CD8-positive, alpha-beta T cell (primary cell): ENCODE measurements at regions of chr19 and their contacts with region 1.

Region 1: GRCh38 chr19:18322759-18323460 is at the start of gene LSM4:
- DNase-seq: peak; percentile 99 to 100 (median 99)
- ATAC-seq: peak; percentile 94
- H3K4me3 ChIP-seq: peak within 1 kb of the TSS; percentile 84 to 94
- H3K4me3 Mint-ChIP-seq: peak within 1 kb of the TSS; percentile 84
- H3K27ac ChIP-seq: peak within 1 kb of the TSS; percentile 81 to 85
- H3K27ac Mint-ChIP-seq: peak within 1 kb of the TSS; percentile 92
- H3K4me1 ChIP-seq: peaks cover 58% of the 10 kb centered on the region
- H3K4me1 Mint-ChIP-seq: peaks cover 47% of the 10 kb centered on the region
- H3K27me3 ChIP-seq: no peaks in the 10 kb centered on the region
- H3K27me3 Mint-ChIP-seq: no peaks in the 10 kb centered on the region
- CTCF ChIP-seq: peak; percentile 71
- total RNA-seq, gene LSM4: 41.1 to 43.9 TPM

Region 2: DNA sequence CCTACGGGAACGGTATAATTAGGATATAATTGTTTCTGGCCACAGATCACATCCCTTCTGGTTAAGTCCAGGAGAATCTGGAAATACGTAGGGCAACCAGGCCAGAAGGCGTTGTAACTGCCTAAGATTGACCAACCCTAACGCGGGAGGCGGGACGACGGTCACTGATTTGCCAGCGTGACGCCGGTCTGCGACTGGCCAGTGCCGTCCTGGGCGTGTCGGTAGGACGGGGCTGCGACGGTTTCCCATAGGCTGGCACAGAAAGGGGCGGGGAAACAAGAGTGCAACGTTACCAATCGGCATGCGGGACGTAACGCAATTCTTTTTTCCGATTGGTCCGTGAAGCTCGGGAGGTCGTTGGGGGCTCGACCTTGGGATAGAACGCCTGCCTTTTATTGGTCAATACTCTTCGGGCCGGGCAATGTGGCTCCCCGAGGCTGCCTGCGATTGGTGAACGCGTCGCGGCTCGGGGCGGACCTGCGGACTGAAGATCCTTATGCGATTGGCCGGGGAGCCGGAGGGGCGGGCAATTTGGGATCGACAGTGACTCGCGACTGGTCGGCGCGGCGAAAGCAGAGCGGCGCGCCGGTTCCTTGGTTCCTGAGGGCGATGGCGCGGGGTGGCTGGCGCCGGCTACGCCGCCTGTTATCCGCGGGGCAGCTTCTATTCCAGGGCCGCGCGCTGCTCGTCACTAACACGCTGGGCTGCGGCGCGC is 130.1 kb before region 1 on chr19 and contains the start of gene MPV17L2:
- CTCF ChIA-PET with region 1: interaction called, 5 read pairs
- POLR2A ChIA-PET with region 1: no interaction called
- intact Hi-C with region 1: loop called (anchors 1 kb)
- DNase-seq: peak; percentile 95 to 100 (median 97)
- ATAC-seq: peak; percentile 84
- H3K4me3 ChIP-seq: peak within 1 kb of the TSS; percentile 73
- H3K4me3 Mint-ChIP-seq: peak within 1 kb of the TSS; percentile 87
- H3K27ac ChIP-seq: peak within 1 kb of the TSS; percentile 64 to 82
- H3K27ac Mint-ChIP-seq: peak within 1 kb of the TSS; percentile 90
- H3K4me1 ChIP-seq: peaks cover 18% of the 10 kb centered on the region
- H3K4me1 Mint-ChIP-seq: peaks cover 22% of the 10 kb centered on the region
- H3K27me3 ChIP-seq: no peaks in the 10 kb centered on the region
- H3K27me3 Mint-ChIP-seq: no peaks in the 10 kb centered on the region
- CTCF ChIP-seq: no peak
- total RNA-seq, gene MPV17L2: 4.0 to 5.2 TPM

Region 3: GRCh38 chr19:18291590-18292461 is 31.1 kb before region 1 on chr19:
- CTCF ChIA-PET with region 1: interaction called, 5 read pairs
- POLR2A ChIA-PET with region 1: interaction called, 20 read pairs
- intact Hi-C with region 1: loop called (anchors 1 kb)
- DNase-seq: peak; percentile 66 to 93 (median 82)
- ATAC-seq: peak; percentile 45
- H3K4me3 ChIP-seq: peak overlapping the region; percentile 71 to 91
- H3K4me3 Mint-ChIP-seq: peak overlapping the region; percentile 86
- H3K27ac ChIP-seq: peak overlapping the region; percentile 93 to 100
- H3K27ac Mint-ChIP-seq: peak overlapping the region; percentile 95
- H3K4me1 ChIP-seq: peaks cover 54% of the 10 kb centered on the region
- H3K4me1 Mint-ChIP-seq: peaks cover 55% of the 10 kb centered on the region
- H3K27me3 ChIP-seq: no peaks in the 10 kb centered on the region
- H3K27me3 Mint-ChIP-seq: no peaks in the 10 kb centered on the region
- CTCF ChIP-seq: no peak

Region 4: GRCh38 chr19:18304458-18305310 is 18.2 kb before region 1 on chr19:
- CTCF ChIA-PET with region 1: interaction called, 14 read pairs
- POLR2A ChIA-PET with region 1: interaction called, 28 read pairs
- intact Hi-C with region 1: loop called (anchors 1 kb)
- DNase-seq: peak; percentile 69 to 93 (median 89)
- ATAC-seq: peak; percentile 77
- H3K4me3 ChIP-seq: peak overlapping the region; percentile 58 to 63
- H3K4me3 Mint-ChIP-seq: peak overlapping the region; percentile 97
- H3K27ac ChIP-seq: peak overlapping the region; percentile 91 to 94
- H3K27ac Mint-ChIP-seq: peak overlapping the region; percentile 100
- H3K4me1 ChIP-seq: peaks cover 64% of the 10 kb centered on the region
- H3K4me1 Mint-ChIP-seq: peaks cover 45% of the 10 kb centered on the region
- H3K27me3 ChIP-seq: no peaks in the 10 kb centered on the region
- H3K27me3 Mint-ChIP-seq: no peaks in the 10 kb centered on the region
- CTCF ChIP-seq: no peak

Region 5: DNA sequence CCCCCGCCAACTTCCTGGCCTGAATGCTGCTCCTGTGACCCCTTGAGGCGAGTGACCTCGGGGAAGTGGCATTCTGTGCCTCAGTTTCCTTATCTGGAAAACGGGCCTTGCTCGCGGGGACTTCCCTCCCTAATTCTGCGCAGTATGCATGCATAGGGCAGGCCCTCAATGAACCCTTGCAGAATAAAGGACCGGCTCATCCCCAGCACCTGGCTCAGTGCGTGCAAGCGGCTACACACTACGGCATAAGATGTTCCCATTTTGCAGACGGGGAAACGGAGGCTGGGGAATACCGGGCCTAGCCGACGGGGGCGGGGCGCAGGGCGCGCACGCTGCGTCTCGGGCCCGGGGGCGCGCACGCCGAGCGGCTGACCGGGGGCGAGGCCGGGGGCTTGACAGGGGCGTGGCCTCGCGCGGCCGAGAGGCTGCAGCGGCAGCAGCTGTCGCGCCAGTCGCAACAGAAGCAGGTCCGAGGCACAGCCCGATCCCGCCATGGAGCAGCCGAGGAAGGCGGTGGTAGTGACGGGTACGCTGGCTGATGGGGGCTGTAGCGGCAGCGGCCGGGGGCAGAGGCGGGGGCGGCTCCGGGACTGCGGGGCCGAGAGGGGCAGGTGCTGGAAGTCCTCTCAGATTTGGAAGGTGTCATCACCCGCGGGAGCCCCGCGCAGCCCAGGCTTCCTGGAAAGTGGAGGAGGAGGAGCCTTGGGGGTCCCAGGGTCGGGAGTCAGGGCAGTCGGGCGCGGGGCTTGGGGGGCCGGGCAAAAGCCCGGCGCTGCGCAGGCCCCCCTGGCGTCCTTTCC is 17.5 kb after region 1 on chr19 and contains the start of gene PGPEP1:
- CTCF ChIA-PET with region 1: interaction called, 16 read pairs
- POLR2A ChIA-PET with region 1: no interaction called
- intact Hi-C with region 1: loop called in 1 of 2 experiments (anchors 2 kb)
- DNase-seq: peak; percentile 13 to 84 (median 67)
- ATAC-seq: peak; percentile 39
- H3K4me3 ChIP-seq: peak within 1 kb of the TSS; percentile 50 to 75
- H3K4me3 Mint-ChIP-seq: peak within 1 kb of the TSS; percentile 88
- H3K27ac ChIP-seq: peak within 1 kb of the TSS; percentile 49 to 51
- H3K27ac Mint-ChIP-seq: peak within 1 kb of the TSS; percentile 85
- H3K4me1 ChIP-seq: peaks cover 15% of the 10 kb centered on the region
- H3K4me1 Mint-ChIP-seq: peaks cover 13% of the 10 kb centered on the region
- H3K27me3 ChIP-seq: no peaks in the 10 kb centered on the region
- H3K27me3 Mint-ChIP-seq: no peaks in the 10 kb centered on the region
- CTCF ChIP-seq: no peak
- total RNA-seq, gene PGPEP1: 20.0 to 25.2 TPM